Activated B cell treated with CpG ODN at 0.5 μM for 24 hours (primary cell): ENCODE measurements at regions of chr17 and their contacts with region 1.

Region 1: GRCh38 chr17:40531051-40531991 is 29.9 kb upstream of the TNS4 start:
- DNase-seq: no peak
- ATAC-seq: peak; percentile 26
- H3K4me3 Mint-ChIP-seq: peak overlapping the region; percentile 42
- H3K27ac Mint-ChIP-seq: peak overlapping the region; percentile 93
- H3K4me1 Mint-ChIP-seq: peaks cover 61% of the 10 kb centered on the region
- H3K27me3 Mint-ChIP-seq: no peaks in the 10 kb centered on the region
- CTCF ChIP-seq: no peak

Region 2: DNA sequence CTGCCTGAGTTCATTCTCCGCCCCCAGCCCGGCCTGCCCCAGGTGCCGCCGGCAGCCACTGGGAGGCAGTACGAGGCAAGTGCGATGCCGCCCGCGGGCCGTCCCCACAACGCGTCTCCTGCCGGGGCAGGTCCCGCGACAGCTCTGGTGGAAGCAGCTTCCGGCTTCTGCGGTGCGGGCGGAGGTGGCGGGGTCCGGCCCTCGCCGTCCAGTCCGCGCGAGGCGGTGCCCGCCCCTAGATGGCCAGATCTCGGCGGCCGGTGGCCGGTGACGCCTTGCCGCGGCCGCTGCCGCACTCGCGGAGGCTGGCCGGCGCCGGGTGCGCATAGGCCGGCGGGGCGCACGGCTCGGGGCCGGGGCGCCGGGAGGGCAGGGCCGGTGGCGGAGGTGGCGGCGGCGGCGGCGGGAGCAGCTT is 168.6 kb before region 1 on chr17:
- CTCF ChIA-PET with region 1: interaction called, 70 read pairs
- POLR2A ChIA-PET with region 1: interaction called, 13 read pairs
- intact Hi-C with region 1: loop called (anchors 1 kb)
- DNase-seq: peak; percentile 73
- ATAC-seq: peak; percentile 85
- H3K4me3 Mint-ChIP-seq: peak overlapping the region; percentile 58
- H3K27ac Mint-ChIP-seq: peak overlapping the region; percentile 67
- H3K4me1 Mint-ChIP-seq: peaks cover 17% of the 10 kb centered on the region
- H3K27me3 Mint-ChIP-seq: peaks cover 14% of the 10 kb centered on the region
- CTCF ChIP-seq: no peak

Region 3: DNA sequence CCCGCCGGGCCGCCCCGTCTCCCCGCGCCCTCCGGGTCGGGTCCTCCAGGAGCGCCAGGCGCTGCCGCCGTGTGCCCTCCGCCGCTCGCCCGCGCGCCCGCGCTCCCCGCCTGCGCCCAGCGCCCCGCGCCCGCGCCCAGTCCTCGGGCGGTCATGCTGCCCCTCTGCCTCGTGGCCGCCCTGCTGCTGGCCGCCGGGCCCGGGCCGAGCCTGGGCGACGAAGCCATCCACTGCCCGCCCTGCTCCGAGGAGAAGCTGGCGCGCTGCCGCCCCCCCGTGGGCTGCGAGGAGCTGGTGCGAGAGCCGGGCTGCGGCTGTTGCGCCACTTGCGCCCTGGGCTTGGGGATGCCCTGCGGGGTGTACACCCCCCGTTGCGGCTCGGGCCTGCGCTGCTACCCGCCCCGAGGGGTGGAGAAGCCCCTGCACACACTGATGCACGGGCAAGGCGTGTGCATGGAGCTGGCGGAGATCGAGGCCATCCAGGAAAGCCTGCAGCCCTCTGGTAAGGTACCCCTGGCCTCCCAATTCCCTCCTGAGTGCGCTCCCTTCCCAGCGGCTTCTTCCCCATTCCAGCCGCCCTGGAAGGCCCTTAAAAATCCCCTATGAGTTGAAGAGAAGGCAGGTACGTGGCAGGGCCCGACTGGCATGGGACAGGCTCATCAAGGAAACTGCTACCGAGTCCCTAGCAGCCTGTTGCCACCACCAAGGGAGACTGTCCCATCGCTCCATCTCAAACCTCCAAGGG is 87.6 kb before region 1 on chr17:
- CTCF ChIA-PET with region 1: interaction called, 111 read pairs
- POLR2A ChIA-PET with region 1: interaction called, 57 read pairs
- intact Hi-C with region 1: loop called (anchors 1 kb)
- DNase-seq: peak; percentile 72
- ATAC-seq: peak; percentile 83
- H3K4me3 Mint-ChIP-seq: peak overlapping the region; percentile 81
- H3K27ac Mint-ChIP-seq: peak overlapping the region; percentile 79
- H3K4me1 Mint-ChIP-seq: peaks cover 37% of the 10 kb centered on the region
- H3K27me3 Mint-ChIP-seq: no peaks in the 10 kb centered on the region
- CTCF ChIP-seq: no peak

Region 4: GRCh38 chr17:40516581-40517285 is 14.6 kb before region 1 on chr17:
- CTCF ChIA-PET with region 1: interaction called, 11 read pairs
- POLR2A ChIA-PET with region 1: interaction called, 31 read pairs
- intact Hi-C with region 1: loop called (anchors 1 kb)
- DNase-seq: no peak
- ATAC-seq: peak; percentile 87
- H3K4me3 Mint-ChIP-seq: peak overlapping the region; percentile 74
- H3K27ac Mint-ChIP-seq: peak overlapping the region; percentile 69
- H3K4me1 Mint-ChIP-seq: peaks cover 62% of the 10 kb centered on the region
- H3K27me3 Mint-ChIP-seq: no peaks in the 10 kb centered on the region
- CTCF ChIP-seq: no peak

Region 5: GRCh38 chr17:40622509-40622928 is 91.2 kb after region 1 on chr17:
- CTCF ChIA-PET with region 1: interaction called, 64 read pairs
- POLR2A ChIA-PET with region 1: interaction called, 117 read pairs
- intact Hi-C with region 1: no loop called
- DNase-seq: no peak
- ATAC-seq: no peak
- H3K4me3 Mint-ChIP-seq: peak overlapping the region; percentile 53
- H3K27ac Mint-ChIP-seq: peak overlapping the region; percentile 67
- H3K4me1 Mint-ChIP-seq: peaks cover 71% of the 10 kb centered on the region
- H3K27me3 Mint-ChIP-seq: no peaks in the 10 kb centered on the region
- CTCF ChIP-seq: no peak